ENCODE measurements at regions of chr6 and their contacts with region 1.

Region 1: GRCh38 chr6:139407718-139408222 is 33.3 kb upstream of the CITED2 start:
- DNase-seq: no peak
- ATAC-seq: no peak
- H3K4me3 ChIP-seq: no peak overlapping the region
- H3K4me3 Mint-ChIP-seq: no peak overlapping the region
- H3K27ac ChIP-seq: no peak overlapping the region
- H3K27ac Mint-ChIP-seq: no peak overlapping the region
- H3K4me1 ChIP-seq: no peaks in the 10 kb centered on the region
- H3K4me1 Mint-ChIP-seq: no peaks in the 10 kb centered on the region
- H3K27me3 ChIP-seq: no peaks in the 10 kb centered on the region
- H3K27me3 Mint-ChIP-seq: no peaks in the 10 kb centered on the region
- CTCF ChIP-seq: no peak

Region 2: GRCh38 chr6:138393871-138394783 is 1013.6 kb before region 1 on chr6:
- CTCF ChIA-PET with region 1: no interaction called
- POLR2A ChIA-PET with region 1: no interaction called
- intact Hi-C with region 1: no loop called
- DNase-seq: no peak
- ATAC-seq: no peak
- H3K4me3 ChIP-seq: no peak overlapping the region
- H3K4me3 Mint-ChIP-seq: no peak overlapping the region
- H3K27ac ChIP-seq: no peak overlapping the region
- H3K27ac Mint-ChIP-seq: no peak overlapping the region
- H3K4me1 ChIP-seq: no peaks in the 10 kb centered on the region
- H3K4me1 Mint-ChIP-seq: no peaks in the 10 kb centered on the region
- H3K27me3 ChIP-seq: peaks cover 0 to 4% of the 10 kb centered on the region in 2 experiments
- H3K27me3 Mint-ChIP-seq: peaks cover 10% of the 10 kb centered on the region
- CTCF ChIP-seq: no peak

Region 3: DNA sequence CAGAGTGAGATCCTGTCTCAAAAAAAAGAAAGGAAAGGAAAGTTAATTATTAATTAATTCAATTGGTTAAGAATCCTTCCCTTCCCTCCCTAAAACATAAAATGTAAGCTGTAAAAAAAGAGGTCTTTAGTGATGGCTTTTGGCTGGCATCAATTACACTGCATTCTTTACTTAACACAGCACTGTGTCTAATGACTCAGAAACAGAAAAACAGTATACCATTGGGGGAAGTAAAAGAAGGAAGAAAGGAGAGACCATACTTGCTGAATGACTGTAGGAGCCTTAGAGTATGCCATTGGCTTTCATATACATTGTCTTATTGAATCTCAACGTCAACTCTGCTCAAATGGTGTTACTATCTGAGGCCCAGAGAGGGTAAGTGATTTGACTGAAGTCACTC is 15.0 kb before region 1 on chr6:
- CTCF ChIA-PET with region 1: no interaction called
- POLR2A ChIA-PET with region 1: no interaction called
- intact Hi-C with region 1: loop called in 1 of 2 experiments (anchors 1 kb)
- DNase-seq: no peak
- ATAC-seq: no peak
- H3K4me3 ChIP-seq: no peak overlapping the region
- H3K4me3 Mint-ChIP-seq: no peak overlapping the region
- H3K27ac ChIP-seq: no peak overlapping the region
- H3K27ac Mint-ChIP-seq: no peak overlapping the region
- H3K4me1 ChIP-seq: no peaks in the 10 kb centered on the region
- H3K4me1 Mint-ChIP-seq: no peaks in the 10 kb centered on the region
- H3K27me3 ChIP-seq: no peaks in the 10 kb centered on the region
- H3K27me3 Mint-ChIP-seq: no peaks in the 10 kb centered on the region
- CTCF ChIP-seq: no peak

Measured in CD4-positive, alpha-beta T cell (primary cell).